Dorsolateral prefrontal cortex (tissue), 120 donors: ENCODE measurements at regions of chr6 and their contacts with region 1.

Region 1: GRCh38 chr6:17086469-17086868 is 15.4 kb upstream of the STMND1 start:
- DNase-seq: peak in 7 of 10 donors; percentile 16 to 81 (median 56)
- H3K4me3 ChIP-seq: no peak overlapping the region
- H3K27ac ChIP-seq: no peak overlapping the region
- H3K27me3 ChIP-seq: no peaks in the 10 kb centered on the region
- CTCF ChIP-seq: peak; percentile 58 to 90 (median 80)

Region 2: DNA sequence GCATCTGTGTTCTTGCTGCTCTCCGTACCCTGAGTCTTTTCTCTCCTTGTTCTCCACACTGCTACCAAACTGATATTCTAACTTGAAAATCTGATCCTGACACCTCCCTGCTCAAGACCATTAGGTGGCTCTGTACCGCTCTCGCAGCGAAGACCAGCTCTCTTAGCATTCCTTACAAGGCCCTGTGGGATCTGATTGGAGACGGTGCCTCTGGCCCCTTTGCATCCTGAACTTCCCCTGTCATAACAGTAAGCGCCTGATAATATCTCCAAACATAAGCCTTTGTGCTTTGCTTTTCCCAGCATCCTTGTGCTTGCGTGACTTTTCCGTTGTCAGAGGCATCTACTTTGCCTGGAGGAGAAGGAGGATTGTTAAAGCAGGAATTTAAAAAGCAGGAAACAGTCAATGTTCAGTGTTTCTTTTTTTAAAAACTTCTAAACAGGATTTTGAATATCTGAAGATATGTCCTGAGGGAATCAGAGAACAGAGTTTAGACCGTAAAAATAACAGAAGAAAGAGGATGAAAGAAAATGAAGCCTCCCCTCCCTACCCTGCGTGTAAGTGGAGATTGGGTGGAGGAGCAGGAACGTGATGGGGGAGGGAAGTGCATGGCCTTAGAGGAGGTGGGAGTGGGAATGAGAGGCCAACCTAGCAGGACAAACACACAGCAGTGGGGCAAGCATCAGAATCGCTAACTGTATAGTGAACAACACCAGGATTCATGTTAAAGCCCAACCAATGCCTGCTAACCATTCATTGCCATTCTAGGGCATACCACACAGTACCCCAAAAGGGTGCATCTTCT is 73.8 kb before region 1 on chr6:
- intact Hi-C with region 1: loop called in 1 of 2 experiments (anchors 2 kb)
- DNase-seq: peak in 6 of 10 donors; percentile 23 to 53 (median 40)
- H3K4me3 ChIP-seq: no peak overlapping the region
- H3K27ac ChIP-seq: peak overlapping the region in 2 of 59 donors; percentile 18 to 41
- H3K27me3 ChIP-seq: peaks cover 0 to 4% (median 0%) of the 10 kb centered on the region in 45 donors
- CTCF ChIP-seq: peak in 47 of 56 donors; percentile 13 to 69 (median 40)

Region 3: DNA sequence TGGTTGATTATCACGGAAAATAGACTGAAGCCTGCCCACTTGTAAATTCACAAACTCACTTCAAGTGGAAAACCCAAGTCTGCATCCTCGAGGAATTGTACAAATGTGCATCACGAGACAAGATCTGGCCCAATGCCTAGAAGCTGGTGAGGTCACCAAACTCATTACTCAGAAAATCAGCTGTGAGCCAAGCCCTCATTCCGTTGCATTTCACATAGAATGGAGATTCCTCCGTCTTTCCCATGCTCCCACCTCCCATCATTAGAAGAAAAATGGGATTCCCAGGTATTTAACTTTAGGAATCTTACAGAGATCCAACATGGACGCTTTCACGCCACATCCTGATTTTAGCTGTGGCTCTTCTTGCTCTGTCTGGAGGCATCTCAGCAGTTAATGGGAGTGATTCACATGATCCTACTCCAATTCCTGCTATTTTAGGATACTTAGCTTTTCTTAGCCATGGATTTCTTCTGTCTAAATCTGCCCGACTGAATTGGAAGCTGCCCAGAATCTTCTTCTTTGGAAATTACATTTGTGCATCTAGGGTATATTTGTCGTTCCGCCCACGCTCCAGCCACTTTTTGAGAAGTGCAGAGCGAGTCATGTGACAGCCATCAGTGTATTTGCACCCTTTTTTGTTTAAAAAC is 53.4 kb before region 1 on chr6:
- intact Hi-C with region 1: loop called (anchors 5 kb)
- DNase-seq: peak in 8 of 10 donors; percentile 21 to 84 (median 58)
- H3K4me3 ChIP-seq: peak overlapping the region in 58 of 59 donors; percentile 7 to 61 (median 41)
- H3K27ac ChIP-seq: peak overlapping the region in 55 of 59 donors; percentile 2 to 94 (median 82)
- H3K27me3 ChIP-seq: no peaks in the 10 kb centered on the region
- CTCF ChIP-seq: peak in 2 of 56 donors; percentile 7 to 10